HepG2 (cell line): ENCODE measurements at regions of chr12 and their contacts with region 1.

Region 1: DNA sequence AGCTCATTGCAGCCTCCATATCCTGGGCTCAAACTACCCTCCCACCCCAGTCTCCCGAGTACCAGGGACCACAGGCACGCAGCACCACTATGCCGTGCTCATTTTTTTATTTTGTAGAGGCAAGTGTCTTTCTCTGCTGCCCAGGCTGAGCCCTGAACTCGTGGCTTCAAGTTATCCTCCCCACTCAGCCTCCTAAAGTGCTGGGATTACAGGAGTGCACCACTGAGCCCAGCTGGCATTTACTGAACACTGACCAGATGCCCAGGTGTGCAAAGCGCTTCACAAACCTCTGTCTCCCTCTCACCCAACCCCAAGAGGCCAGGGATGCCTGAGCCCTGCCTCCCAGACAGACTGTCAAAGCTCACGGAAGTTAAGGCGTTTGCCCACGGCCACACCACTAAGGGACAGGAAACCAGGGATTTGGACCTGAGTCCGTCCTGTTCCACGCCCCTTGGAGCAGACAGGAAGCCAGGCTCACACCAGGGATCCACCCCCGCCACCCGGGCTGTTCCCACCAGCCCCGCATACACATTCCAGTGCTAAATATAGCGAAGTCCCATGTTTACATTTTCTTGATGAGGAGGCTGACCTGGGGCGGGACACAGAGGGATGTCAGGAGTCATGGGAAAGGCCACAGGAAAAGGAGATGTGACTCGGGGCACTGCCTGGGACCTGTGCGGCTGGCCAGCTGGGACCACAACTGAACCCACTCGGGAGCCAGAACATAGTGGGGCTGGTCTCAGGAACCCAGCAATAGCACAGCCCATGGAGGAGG is 51.2 kb downstream of the TESC start:
- DNase-seq: peak; percentile 92
- ATAC-seq: peak; percentile 65
- H3K4me3 ChIP-seq: peak overlapping the region in 1 of 3 experiments; percentile 41; a peak in 1 of 6 replicates
- H3K27ac ChIP-seq: peak overlapping the region; percentile 99
- H3K4me1 ChIP-seq: peaks cover 78% of the 10 kb centered on the region
- H3K27me3 ChIP-seq: no peaks in the 10 kb centered on the region
- CTCF ChIP-seq: no peak
- EP300 ChIP-seq: peak in 1 of 2 experiments; percentile 73; a peak in 2 of 4 replicates
- POLR2A ChIP-seq: peak in 1 of 2 experiments; percentile 22; a peak in 2 of 4 replicates
- RAD21 ChIP-seq: 0 out of 2 replicates have a peak, but pooled peaks have one; percentile 13

Region 2: DNA sequence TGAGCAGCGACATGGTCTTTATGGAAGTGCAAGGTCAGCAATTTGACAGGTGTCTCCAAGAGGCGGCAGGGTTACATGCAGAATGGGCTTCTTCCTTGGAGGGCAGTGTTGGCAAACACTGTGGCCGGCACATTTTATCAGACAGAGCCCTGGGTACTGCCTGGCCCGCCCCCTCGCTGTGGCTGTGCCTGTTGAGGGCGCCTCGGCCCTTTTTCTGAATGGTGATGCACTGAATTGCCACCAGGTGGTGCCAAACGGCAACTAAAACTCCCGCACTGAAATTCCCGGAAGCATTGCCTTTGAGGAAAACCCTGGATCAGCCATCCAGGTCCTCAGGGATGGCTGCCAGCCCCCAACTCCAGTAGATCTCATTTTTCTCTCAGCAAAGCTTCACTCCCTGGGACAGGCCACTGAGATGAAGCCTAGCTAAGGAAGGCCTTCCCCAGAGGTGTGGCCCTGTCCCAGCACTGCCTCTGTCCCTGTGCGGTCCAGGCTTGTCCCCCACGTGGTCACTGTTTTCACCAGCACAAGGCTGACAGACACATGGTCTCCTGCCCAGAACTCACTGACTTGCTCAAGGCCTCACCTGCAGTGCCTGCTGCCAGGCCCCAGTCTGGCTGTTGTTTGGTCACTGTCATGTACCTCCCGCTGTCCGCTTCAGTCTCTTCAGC is 22.4 kb before region 1 on chr12:
- CTCF ChIA-PET with region 1: interaction called, 8 read pairs
- POLR2A ChIA-PET with region 1: no interaction called
- in situ Hi-C with region 1: no loop called
- intact Hi-C with region 1: loop called (anchors 2 kb)
- DNase-seq: peak; percentile 68
- ATAC-seq: peak; percentile 84
- H3K4me3 ChIP-seq: no peak overlapping the region
- H3K27ac ChIP-seq: no peak overlapping the region
- H3K4me1 ChIP-seq: peaks cover 7% of the 10 kb centered on the region; the same call in 1 of the 2 replicates
- H3K27me3 ChIP-seq: no peaks in the 10 kb centered on the region
- CTCF ChIP-seq: peak; percentile 91
- EP300 ChIP-seq: no peak
- POLR2A ChIP-seq: no peak
- RAD21 ChIP-seq: peak; percentile 92

Region 3: DNA sequence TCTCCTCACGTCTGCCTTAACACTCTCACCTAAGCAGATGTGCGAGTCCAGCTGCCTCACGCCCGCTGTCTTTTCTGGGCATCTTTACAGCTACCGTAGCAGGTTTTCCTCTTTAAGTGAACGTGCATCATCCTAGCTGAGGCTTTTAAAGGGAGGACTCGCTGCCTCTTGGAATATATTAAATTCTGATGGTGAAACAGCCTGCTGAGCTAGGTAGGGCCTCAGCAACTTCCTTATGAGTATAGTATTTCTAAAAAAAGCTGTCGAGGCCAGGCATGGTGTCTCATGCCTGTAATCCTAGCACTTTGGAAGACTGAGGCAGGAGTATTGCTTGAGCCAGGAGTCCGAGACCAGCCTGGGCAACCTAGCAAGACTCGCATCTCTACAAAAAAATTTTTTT is 19.0 kb after region 1 on chr12:
- CTCF ChIA-PET with region 1: no interaction called
- POLR2A ChIA-PET with region 1: no interaction called
- in situ Hi-C with region 1: no loop called
- intact Hi-C with region 1: loop called (anchors 2 kb)
- DNase-seq: no peak
- ATAC-seq: no peak
- H3K4me3 ChIP-seq: no peak overlapping the region
- H3K27ac ChIP-seq: no peak overlapping the region
- H3K4me1 ChIP-seq: no peaks in the 10 kb centered on the region
- H3K27me3 ChIP-seq: no peaks in the 10 kb centered on the region
- CTCF ChIP-seq: no peak
- EP300 ChIP-seq: no peak
- POLR2A ChIP-seq: no peak
- RAD21 ChIP-seq: no peak

Region 4: DNA sequence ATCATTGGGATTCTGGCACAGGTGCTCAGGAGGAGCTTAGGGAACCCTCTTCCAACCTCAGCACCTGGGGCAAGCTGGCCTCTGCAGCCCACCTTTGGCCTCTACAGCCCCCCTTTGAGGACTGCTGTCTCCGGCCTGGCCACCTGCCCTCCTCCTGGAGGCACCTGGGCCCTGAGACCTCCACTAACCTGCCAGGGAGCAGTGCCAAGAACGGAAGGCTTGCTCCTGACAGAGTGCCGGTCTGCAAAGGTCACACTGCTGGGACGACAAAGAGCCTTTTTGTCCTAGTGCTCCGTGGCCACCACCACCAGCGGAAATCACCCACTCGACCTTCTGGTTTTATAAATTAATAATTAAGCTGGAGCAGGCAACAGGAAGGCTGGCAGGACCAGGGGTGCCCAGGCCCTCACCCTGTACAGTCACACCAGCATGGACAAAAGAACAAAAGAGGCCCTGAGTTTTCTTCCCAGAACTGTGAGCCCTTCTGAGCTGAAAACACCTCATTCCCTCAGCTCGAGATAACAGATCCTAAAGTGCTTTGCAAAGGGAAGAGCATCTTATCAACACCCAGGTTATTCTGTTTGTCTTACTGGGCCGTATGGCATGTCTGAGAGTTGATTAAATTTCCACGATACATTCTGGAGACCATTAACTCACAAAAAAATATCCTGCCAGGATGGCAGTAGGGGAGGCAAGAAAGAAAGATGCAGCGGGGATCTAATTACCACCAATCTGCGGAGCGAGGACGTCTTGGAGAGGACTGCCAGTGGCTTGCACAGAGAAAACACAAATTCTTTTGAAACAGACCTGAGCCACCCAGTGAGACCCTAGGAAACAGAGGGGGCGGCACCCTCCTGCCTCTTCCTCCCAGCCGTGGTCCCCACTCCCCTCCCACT is 43.1 kb after region 1 on chr12:
- CTCF ChIA-PET with region 1: no interaction called
- POLR2A ChIA-PET with region 1: interaction called, 9 read pairs
- in situ Hi-C with region 1: loop called (anchors 5 kb)
- intact Hi-C with region 1: loop called (anchors 2 kb)
- DNase-seq: peak; percentile 94
- ATAC-seq: peak; percentile 93
- H3K4me3 ChIP-seq: peak overlapping the region in 1 of 3 experiments; percentile 52; a peak in 2 of 6 replicates
- H3K27ac ChIP-seq: peak overlapping the region; percentile 82
- H3K4me1 ChIP-seq: peaks cover 100% of the 10 kb centered on the region
- H3K27me3 ChIP-seq: no peaks in the 10 kb centered on the region
- CTCF ChIP-seq: no peak
- EP300 ChIP-seq: peak in 1 of 2 experiments; percentile 75; a peak in 2 of 4 replicates
- POLR2A ChIP-seq: peak; percentile 49 to 50; a peak in 3 of 4 replicates
- RAD21 ChIP-seq: no peak

Region 5: DNA sequence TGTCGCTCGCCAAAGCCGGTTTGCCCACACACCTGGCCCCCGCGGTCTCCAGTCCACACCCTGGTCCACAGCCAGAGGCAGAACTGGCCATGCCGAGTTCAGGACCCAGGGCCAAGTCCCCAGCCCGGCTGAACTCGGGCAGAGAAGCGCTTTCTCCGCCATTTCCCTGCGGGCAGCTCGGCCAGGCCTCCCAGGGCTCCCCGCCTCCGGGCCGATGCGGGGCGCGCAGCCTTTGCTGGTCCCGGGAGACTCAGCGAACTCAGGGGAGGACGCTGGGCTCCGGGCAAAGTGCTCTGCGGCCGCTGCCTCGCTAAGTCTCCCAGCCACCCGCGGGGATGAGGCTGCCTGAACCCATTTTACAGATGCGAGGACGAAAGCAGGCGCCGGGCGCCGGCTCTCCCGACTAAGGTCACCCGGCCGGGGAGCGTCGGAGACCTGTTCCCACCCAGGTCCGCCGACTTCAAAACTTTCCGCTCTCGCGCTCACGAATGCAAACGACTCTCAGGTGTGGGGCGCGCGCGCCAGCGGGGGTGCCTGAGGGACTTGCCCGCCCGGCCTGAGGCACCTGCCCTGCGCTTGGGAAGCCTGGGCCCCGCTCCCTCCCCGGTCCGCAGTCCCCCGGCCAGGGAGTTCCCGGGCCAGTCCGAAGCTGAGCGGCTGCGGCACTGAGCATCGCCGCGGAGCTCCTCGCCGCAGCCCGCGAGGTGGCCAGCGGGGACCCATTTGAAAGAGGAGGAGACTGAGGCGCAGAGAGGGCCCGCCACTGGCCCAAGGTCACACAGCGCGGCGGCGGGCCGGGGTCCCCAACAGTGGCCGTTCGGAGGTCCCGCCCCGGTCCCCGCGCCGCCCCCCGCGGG is 50.6 kb after region 1 on chr12:
- CTCF ChIA-PET with region 1: no interaction called
- POLR2A ChIA-PET with region 1: interaction called, 4 read pairs
- in situ Hi-C with region 1: loop called (anchors 5 kb)
- intact Hi-C with region 1: loop called (anchors 2 kb)
- DNase-seq: no peak
- ATAC-seq: peak; percentile 30
- H3K4me3 ChIP-seq: peak overlapping the region; percentile 89 to 92 (median 91)
- H3K27ac ChIP-seq: peak overlapping the region; percentile 40
- H3K4me1 ChIP-seq: peaks cover 78% of the 10 kb centered on the region
- H3K27me3 ChIP-seq: no peaks in the 10 kb centered on the region; a peak in 1 of 5 replicates
- CTCF ChIP-seq: no peak
- EP300 ChIP-seq: no peak
- POLR2A ChIP-seq: no peak
- RAD21 ChIP-seq: no peak